HCT116 (cell line): ENCODE measurements at regions of chr7 and their contacts with region 1.

Region 1: GRCh38 chr7:8217200-8218068 is 44.5 kb downstream of the ICA1 start:
- DNase-seq: peak; percentile 54
- ATAC-seq: peak; percentile 69
- H3K4me3 ChIP-seq: no peak overlapping the region
- H3K27ac ChIP-seq: no peak overlapping the region
- H3K4me1 ChIP-seq: no peaks in the 10 kb centered on the region
- H3K27me3 ChIP-seq: no peaks in the 10 kb centered on the region
- CTCF ChIP-seq: peak; percentile 34 to 83 (median 49); a peak in 4 of 6 replicates
- POLR2A ChIP-seq: no peak
- RAD21 ChIP-seq: peak; percentile 74

Region 2: GRCh38 chr7:7424151-7424873 is 793.1 kb before region 1 on chr7:
- CTCF ChIA-PET with region 1: interaction called, 4 read pairs
- POLR2A ChIA-PET with region 1: no interaction called
- RAD21 ChIA-PET with region 1: no interaction called
- intact Hi-C with region 1: loop called (anchors 5 kb)
- DNase-seq: peak; percentile 66
- ATAC-seq: peak; percentile 96
- H3K4me3 ChIP-seq: peak overlapping the region; percentile 23 to 42
- H3K27ac ChIP-seq: no peak overlapping the region
- H3K4me1 ChIP-seq: peaks cover 0 to 3% of the 10 kb centered on the region in 2 experiments; a peak in 2 of 4 replicates
- H3K27me3 ChIP-seq: no peaks in the 10 kb centered on the region
- CTCF ChIP-seq: peak; percentile 85 to 91 (median 89)
- POLR2A ChIP-seq: no peak
- RAD21 ChIP-seq: peak; percentile 99

Region 3: GRCh38 chr7:7595451-7595850 is 622.0 kb before region 1 on chr7:
- CTCF ChIA-PET with region 1: interaction called, 7 read pairs
- POLR2A ChIA-PET with region 1: no interaction called
- RAD21 ChIA-PET with region 1: no interaction called
- intact Hi-C with region 1: loop called (anchors 2 kb)
- DNase-seq: peak; percentile 8
- ATAC-seq: no peak
- H3K4me3 ChIP-seq: no peak overlapping the region
- H3K27ac ChIP-seq: no peak overlapping the region
- H3K4me1 ChIP-seq: no peaks in the 10 kb centered on the region
- H3K27me3 ChIP-seq: no peaks in the 10 kb centered on the region
- CTCF ChIP-seq: peak in 2 of 3 experiments; percentile 38 to 53; a peak in 3 of 6 replicates
- POLR2A ChIP-seq: no peak
- RAD21 ChIP-seq: peak; percentile 65

Region 4: DNA sequence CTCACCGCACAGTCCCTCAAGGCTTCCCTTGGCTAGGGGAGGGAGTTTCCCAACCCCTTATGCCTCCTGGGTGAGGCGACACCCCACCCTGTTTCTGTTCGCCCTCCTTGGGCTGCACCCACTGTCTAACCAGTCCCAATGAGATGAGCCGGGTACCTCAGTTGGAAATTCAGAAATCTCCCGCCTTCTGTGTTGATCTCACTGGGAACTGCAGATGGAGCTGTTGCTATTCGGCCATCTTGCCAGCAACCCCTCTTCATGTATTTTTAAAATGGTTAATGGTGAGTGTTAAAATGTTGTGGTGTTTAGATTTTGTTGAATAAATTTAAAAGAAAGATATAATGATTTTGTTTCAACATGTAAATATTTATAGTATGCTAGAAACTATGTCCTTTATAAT is 554.9 kb before region 1 on chr7:
- CTCF ChIA-PET with region 1: no interaction called
- POLR2A ChIA-PET with region 1: no interaction called
- RAD21 ChIA-PET with region 1: no interaction called
- intact Hi-C with region 1: loop called (anchors 5 kb)
- DNase-seq: no peak
- ATAC-seq: peak; percentile 27; the same call in 1 of the 2 replicates
- H3K4me3 ChIP-seq: no peak overlapping the region
- H3K27ac ChIP-seq: no peak overlapping the region
- H3K4me1 ChIP-seq: no peaks in the 10 kb centered on the region
- H3K27me3 ChIP-seq: no peaks in the 10 kb centered on the region
- CTCF ChIP-seq: peak; percentile 37 to 47 (median 39); a peak in 5 of 6 replicates
- POLR2A ChIP-seq: no peak
- RAD21 ChIP-seq: peak; percentile 60

Region 5: DNA sequence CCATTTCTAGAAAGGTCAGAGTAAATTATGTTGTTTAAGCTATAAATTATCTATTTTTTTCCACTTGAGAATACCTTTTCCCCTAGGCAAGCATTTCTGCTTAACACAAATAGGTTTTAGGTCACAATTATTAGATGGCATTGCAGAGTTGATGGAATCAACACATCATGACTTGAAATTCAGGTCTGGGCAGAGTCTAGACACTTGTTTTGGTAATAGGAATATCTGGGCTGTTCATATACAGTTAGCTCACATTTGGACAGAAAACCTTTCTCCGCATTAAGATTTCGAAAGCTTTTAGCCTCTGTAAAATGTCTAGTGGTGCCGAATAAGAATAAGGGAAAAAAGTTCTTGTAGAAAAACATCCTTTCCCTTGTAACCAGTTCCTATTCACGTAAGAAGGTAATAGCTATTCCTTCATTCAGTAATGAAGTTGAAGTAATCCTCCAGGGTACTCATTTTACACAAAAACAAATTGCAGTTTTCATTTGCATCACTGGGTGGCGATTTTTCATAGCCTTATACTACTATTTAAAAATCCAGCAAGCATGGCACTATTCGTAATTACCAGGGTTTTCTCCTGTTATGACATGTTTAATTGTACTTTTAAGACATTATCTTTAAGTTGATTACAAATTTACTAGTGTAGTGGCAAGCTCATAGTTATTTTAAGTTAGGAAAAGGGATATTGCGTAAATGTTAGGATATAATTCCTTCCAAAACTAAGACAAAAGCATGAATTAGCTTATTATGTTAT is 536.1 kb before region 1 on chr7:
- CTCF ChIA-PET with region 1: interaction called, 8 read pairs
- POLR2A ChIA-PET with region 1: no interaction called
- RAD21 ChIA-PET with region 1: no interaction called
- intact Hi-C with region 1: loop called (anchors 5 kb)
- DNase-seq: peak; percentile 44
- ATAC-seq: peak; percentile 84
- H3K4me3 ChIP-seq: no peak overlapping the region
- H3K27ac ChIP-seq: no peak overlapping the region
- H3K4me1 ChIP-seq: 0 out of 4 replicates have a peak, but pooled peaks cover 0 to 4% of the 10 kb centered on the region in 2 experiments
- H3K27me3 ChIP-seq: no peaks in the 10 kb centered on the region
- CTCF ChIP-seq: peak; percentile 41 to 75 (median 66); a peak in 5 of 6 replicates
- POLR2A ChIP-seq: no peak
- RAD21 ChIP-seq: peak; percentile 80

Region 6: GRCh38 chr7:7761340-7761980 is 456.0 kb before region 1 on chr7:
- CTCF ChIA-PET with region 1: no interaction called
- POLR2A ChIA-PET with region 1: no interaction called
- RAD21 ChIA-PET with region 1: no interaction called
- intact Hi-C with region 1: loop called (anchors 10 kb)
- DNase-seq: peak; percentile 26
- ATAC-seq: peak; percentile 60; the same call in 1 of the 2 replicates
- H3K4me3 ChIP-seq: no peak overlapping the region
- H3K27ac ChIP-seq: no peak overlapping the region
- H3K4me1 ChIP-seq: no peaks in the 10 kb centered on the region
- H3K27me3 ChIP-seq: no peaks in the 10 kb centered on the region
- CTCF ChIP-seq: peak; percentile 19 to 47 (median 40); a peak in 4 of 6 replicates
- POLR2A ChIP-seq: no peak
- RAD21 ChIP-seq: peak; percentile 62

Region 7: DNA sequence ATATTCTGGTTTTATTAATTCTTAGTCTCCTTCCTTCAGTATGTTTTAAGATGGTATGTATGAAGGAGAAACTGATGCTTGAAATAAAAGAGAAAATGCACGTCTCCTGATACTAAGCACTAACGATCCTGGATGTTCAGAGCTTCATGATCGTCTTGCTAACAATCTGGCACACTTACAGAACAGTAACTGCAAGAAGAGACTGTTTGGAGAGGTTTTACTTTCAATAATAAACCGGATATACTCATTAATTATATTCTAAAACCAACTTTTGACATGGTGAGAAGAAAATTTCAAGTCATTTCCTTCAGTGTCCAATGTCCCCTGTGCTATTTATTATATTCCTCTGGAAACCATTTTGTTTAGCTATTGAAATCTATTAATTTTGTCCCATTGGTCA is 467.0 kb after region 1 on chr7:
- CTCF ChIA-PET with region 1: no interaction called
- POLR2A ChIA-PET with region 1: no interaction called
- RAD21 ChIA-PET with region 1: no interaction called
- intact Hi-C with region 1: no loop called
- DNase-seq: no peak
- ATAC-seq: no peak
- H3K4me3 ChIP-seq: no peak overlapping the region
- H3K27ac ChIP-seq: no peak overlapping the region
- H3K4me1 ChIP-seq: no peaks in the 10 kb centered on the region
- H3K27me3 ChIP-seq: no peaks in the 10 kb centered on the region
- CTCF ChIP-seq: no peak
- POLR2A ChIP-seq: no peak
- RAD21 ChIP-seq: no peak